HEK293 (cell line): ENCODE measurements at regions of chr9 and their contacts with region 1.

Region 1: DNA sequence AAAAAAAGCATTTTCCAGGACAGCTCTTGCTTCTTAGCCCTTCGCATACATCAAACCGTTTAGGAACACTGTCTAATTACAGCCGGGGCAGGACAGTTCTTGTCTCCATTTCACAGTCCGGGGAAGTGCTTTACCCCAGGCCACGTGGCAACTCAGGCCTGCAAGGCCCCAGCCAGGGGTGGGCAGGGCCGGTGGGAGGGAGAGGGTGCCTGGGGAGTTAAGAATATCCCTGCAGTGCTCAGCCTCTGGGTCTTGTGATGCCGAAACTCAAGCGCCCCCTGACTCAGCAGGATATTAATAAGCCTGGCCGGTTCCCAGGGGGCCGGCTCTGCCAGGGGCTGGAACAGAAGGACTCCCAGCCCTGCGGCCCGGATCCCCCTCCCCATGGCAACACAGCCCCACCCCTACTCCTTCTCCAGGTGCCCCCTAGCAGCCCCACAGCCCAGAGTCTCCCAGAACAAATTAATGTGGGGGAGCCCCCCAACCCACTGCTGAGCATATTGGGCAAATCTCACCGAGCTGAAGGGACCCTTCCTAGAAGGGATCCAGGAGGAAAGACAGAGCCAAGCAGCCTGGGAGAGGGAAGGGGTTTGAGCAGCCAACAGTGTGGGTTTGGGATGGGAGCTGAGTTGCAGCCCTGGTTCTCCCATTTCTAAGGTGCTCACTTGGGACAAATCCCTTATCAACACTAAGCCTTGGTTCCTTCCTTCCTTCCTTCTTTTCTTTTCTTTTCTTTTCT is 45.3 kb downstream of the PLPP7 start:
- H3K4me3 ChIP-seq: no peak overlapping the region
- H3K27ac ChIP-seq: no peak overlapping the region
- H3K4me1 ChIP-seq: no peaks in the 10 kb centered on the region
- CTCF ChIP-seq: no peak

Region 2: GRCh38 chr9:131053896-131054295 is 280.9 kb before region 1 on chr9:
- CTCF ChIA-PET with region 1: interaction called, 94 read pairs
- POLR2A ChIA-PET with region 1: interaction called, 3 read pairs
- H3K4me3 ChIP-seq: no peak overlapping the region
- H3K27ac ChIP-seq: no peak overlapping the region
- H3K4me1 ChIP-seq: no peaks in the 10 kb centered on the region
- CTCF ChIP-seq: no peak

Region 3: GRCh38 chr9:131178382-131178781 is 156.4 kb before region 1 on chr9:
- CTCF ChIA-PET with region 1: interaction called, 183 read pairs
- POLR2A ChIA-PET with region 1: no interaction called
- H3K4me3 ChIP-seq: no peak overlapping the region
- H3K27ac ChIP-seq: no peak overlapping the region
- H3K4me1 ChIP-seq: no peaks in the 10 kb centered on the region
- CTCF ChIP-seq: peak; percentile 72; the same call in 1 of the 2 replicates

Region 4: DNA sequence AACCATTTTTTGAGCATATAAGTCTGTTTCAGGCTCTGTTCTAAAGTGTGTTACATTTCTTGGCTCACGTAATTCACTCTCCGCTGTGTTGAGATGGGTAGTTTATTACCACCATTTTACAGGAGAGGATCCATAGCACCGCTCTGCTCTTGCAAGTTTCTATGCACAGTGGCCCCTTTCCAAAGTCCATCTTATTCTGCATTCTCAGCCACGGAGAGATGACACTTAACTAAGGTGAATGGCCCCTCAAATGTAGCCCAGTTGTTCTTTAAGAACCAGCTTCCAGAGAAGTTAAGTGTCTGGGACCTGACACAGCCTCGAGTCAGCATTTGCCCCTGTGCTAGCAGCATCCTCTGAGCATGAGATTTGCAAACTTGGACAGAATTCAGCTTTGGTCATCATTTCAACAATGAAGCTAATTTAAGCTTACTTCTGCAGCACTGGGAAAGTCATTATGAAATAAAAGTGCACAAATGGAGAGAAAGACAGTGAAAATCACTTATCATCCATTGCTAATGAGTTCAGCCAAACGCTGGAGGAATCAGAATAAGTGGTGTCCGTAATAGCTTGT is 120.4 kb before region 1 on chr9:
- CTCF ChIA-PET with region 1: interaction called, 12 read pairs
- POLR2A ChIA-PET with region 1: no interaction called
- H3K4me3 ChIP-seq: no peak overlapping the region
- H3K27ac ChIP-seq: no peak overlapping the region
- H3K4me1 ChIP-seq: no peaks in the 10 kb centered on the region
- CTCF ChIP-seq: no peak

Region 5: GRCh38 chr9:131277910-131278701 is 56.7 kb before region 1 on chr9:
- CTCF ChIA-PET with region 1: interaction called, 12 read pairs
- POLR2A ChIA-PET with region 1: no interaction called
- H3K4me3 ChIP-seq: peak overlapping the region; percentile 34
- H3K27ac ChIP-seq: no peak overlapping the region
- H3K4me1 ChIP-seq: no peaks in the 10 kb centered on the region
- CTCF ChIP-seq: no peak

Region 6: GRCh38 chr9:131349881-131350563 is 15.2 kb after region 1 on chr9:
- CTCF ChIA-PET with region 1: interaction called, 26 read pairs
- POLR2A ChIA-PET with region 1: no interaction called
- H3K4me3 ChIP-seq: peak overlapping the region; percentile 29
- H3K27ac ChIP-seq: no peak overlapping the region
- H3K4me1 ChIP-seq: no peaks in the 10 kb centered on the region
- CTCF ChIP-seq: peak; percentile 96

Region 7: GRCh38 chr9:131578731-131579504 is 244.1 kb after region 1 on chr9:
- CTCF ChIA-PET with region 1: no interaction called
- POLR2A ChIA-PET with region 1: no interaction called
- H3K4me3 ChIP-seq: no peak overlapping the region
- H3K27ac ChIP-seq: no peak overlapping the region
- H3K4me1 ChIP-seq: no peaks in the 10 kb centered on the region
- CTCF ChIP-seq: no peak